ENCODE measurements at regions of chr14 and their contacts with region 1.

Region 1: GRCh38 chr14:23379366-23380196 is 2.7 kb downstream of the CMTM5 start:
- DNase-seq: peak; percentile 46 to 68 (median 66)
- H3K4me3 ChIP-seq: no peak overlapping the region
- H3K27ac ChIP-seq: no peak overlapping the region
- H3K4me1 ChIP-seq: peaks cover 0 to 24% (median 9%) of the 10 kb centered on the region in 4 experiments
- H3K27me3 ChIP-seq: peaks cover 0 to 3% (median 0%) of the 10 kb centered on the region in 5 experiments

Region 2: DNA sequence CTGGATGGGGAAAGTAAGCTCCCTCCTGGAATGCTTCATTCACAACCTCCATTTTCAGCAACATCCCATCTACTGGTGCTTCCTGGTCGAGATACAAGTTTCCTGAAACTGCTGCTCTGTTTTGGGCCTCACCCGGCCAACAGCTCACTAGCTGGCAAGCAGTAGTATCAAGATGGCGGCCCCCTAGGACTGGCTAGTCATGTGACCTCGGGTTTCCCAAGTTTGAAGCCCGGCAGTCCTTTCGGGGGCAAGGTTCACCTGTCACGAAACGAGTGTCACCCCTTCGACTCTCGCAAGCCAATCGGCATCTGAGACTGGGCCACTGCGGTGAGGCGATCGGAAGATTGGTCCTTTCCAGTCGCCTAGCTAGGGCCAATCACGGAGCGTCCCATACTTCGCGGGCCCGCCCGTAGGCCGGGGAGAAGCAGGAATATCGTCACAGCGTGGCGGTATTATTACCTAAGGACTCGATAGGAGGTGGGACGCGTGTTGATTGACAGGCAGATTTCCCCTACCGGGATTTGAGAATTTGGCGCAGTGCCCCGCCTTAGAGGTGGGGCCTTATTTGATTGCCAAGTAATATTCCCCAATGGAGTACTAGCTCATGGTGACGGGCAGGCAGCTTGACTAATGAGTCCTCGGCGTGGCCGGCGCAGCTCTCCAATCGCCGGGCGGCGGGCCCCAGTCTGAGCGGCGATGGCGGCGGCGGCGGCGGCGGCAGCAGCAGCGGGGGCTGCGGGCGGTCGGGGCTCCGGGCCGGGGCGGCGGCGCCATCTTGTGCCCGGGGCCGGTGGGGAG is 58.6 kb before region 1 on chr14 and contains the start of gene PABPN1:
- CTCF ChIA-PET with region 1: interaction called, 108 read pairs
- POLR2A ChIA-PET with region 1: interaction called, 4 read pairs
- DNase-seq: peak; percentile 100
- H3K4me3 ChIP-seq: peak within 1 kb of the TSS; percentile 66 to 93 (median 83)
- H3K27ac ChIP-seq: peak within 1 kb of the TSS; percentile 89 to 92
- H3K4me1 ChIP-seq: peaks cover 8 to 25% (median 22%) of the 10 kb centered on the region in 4 experiments
- H3K27me3 ChIP-seq: no peaks in the 10 kb centered on the region

Region 3: GRCh38 chr14:23345987-23346692 is 33.4 kb before region 1 on chr14:
- CTCF ChIA-PET with region 1: interaction called, 28 read pairs
- POLR2A ChIA-PET with region 1: no interaction called
- DNase-seq: no peak
- H3K4me3 ChIP-seq: no peak overlapping the region
- H3K27ac ChIP-seq: no peak overlapping the region
- H3K4me1 ChIP-seq: no peaks in the 10 kb centered on the region
- H3K27me3 ChIP-seq: peaks cover 0 to 8% (median 0%) of the 10 kb centered on the region in 5 experiments

Region 4: DNA sequence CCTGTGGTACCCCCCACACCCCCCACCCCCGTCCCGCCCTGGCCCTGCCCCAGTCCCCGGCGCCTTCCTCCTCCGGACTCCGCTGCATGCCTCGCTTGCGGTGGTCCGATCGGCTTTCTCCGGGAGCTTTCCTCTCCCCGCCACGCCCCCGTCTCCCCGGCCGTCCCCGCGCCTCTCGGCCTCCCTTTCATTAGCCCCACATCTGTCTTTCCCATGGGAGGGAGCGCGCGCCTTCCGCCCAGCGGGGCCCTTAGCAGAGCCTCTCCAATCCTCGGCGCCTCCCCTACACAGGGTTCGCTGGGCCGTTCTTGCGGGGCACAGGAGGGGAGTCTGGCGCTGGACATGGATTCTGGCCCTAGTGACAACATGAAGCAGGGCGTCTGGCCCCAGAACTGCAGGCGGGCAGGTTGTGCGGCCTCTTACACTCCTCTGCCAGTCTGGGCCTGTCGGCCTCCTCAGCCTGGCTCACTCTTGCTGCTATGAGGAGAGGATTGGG is 13.1 kb before region 1 on chr14:
- CTCF ChIA-PET with region 1: interaction called, 44 read pairs
- POLR2A ChIA-PET with region 1: no interaction called
- DNase-seq: no peak
- H3K4me3 ChIP-seq: no peak overlapping the region
- H3K27ac ChIP-seq: no peak overlapping the region
- H3K4me1 ChIP-seq: peaks cover 0 to 17% (median 7%) of the 10 kb centered on the region in 4 experiments
- H3K27me3 ChIP-seq: peaks cover 3 to 57% (median 30%) of the 10 kb centered on the region in 5 experiments

Region 5: GRCh38 chr14:23478111-23478759 is 98.7 kb after region 1 on chr14:
- CTCF ChIA-PET with region 1: no interaction called
- POLR2A ChIA-PET with region 1: no interaction called
- DNase-seq: peak; percentile 84 to 93 (median 89)
- H3K4me3 ChIP-seq: no peak overlapping the region
- H3K27ac ChIP-seq: no peak overlapping the region
- H3K4me1 ChIP-seq: no peaks in the 10 kb centered on the region
- H3K27me3 ChIP-seq: no peaks in the 10 kb centered on the region